Breast epithelium (tissue), 4 donors: ENCODE measurements at regions of chr19 and their contacts with region 1.

Region 1: DNA sequence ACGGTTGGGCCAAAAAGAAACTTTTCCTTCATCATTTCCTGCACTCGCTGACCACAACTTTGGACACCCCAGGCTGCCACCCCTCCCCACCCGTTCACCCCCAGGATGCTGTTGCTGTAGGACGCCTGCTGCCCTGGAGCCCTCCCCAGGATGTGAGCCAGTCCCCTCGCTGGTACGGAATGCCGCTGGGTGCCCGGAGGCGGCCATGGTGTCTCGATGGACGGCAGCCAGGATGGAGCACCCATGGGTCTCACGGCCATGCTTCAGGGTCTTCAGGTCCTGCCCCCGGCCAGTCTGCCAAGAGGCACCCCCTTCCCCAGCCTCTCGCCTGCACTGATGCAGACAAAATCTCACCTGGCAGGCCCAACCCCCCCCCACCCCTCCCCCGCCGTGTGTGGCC is 15.4 kb upstream of the CSNK1G2 start:
- DNase-seq: no peak
- H3K4me3 ChIP-seq: no peak overlapping the region
- H3K27ac ChIP-seq: no peak overlapping the region
- H3K4me1 ChIP-seq: peaks cover 0 to 5% of the 10 kb centered on the region in 2 donors
- H3K27me3 ChIP-seq: no peaks in the 10 kb centered on the region
- CTCF ChIP-seq: no peak
- POLR2A ChIP-seq: no peak

Region 2: GRCh38 chr19:1975162-1975480 is 49.6 kb after region 1 on chr19:
- intact Hi-C with region 1: loop called (anchors 1 kb)
- DNase-seq: no peak
- H3K4me3 ChIP-seq: no peak overlapping the region
- H3K27ac ChIP-seq: no peak overlapping the region
- H3K4me1 ChIP-seq: no peaks in the 10 kb centered on the region
- H3K27me3 ChIP-seq: no peaks in the 10 kb centered on the region
- CTCF ChIP-seq: no peak
- POLR2A ChIP-seq: no peak